Naive thymus-derived CD4-positive, alpha-beta T cell (primary cell): ENCODE measurements at regions of chr6 and their contacts with region 1.

Region 1: GRCh38 chr6:131116749-131117360 is 18.4 kb upstream of the AKAP7 start:
- DNase-seq: peak in 6 of 9 donors; percentile 26 to 54 (median 42)
- ATAC-seq: peak; percentile 49
- H3K4me3 ChIP-seq: no peak overlapping the region
- H3K4me3 Mint-ChIP-seq: no peak overlapping the region
- H3K27ac ChIP-seq: no peak overlapping the region
- H3K27ac Mint-ChIP-seq: no peak overlapping the region
- H3K4me1 ChIP-seq: no peaks in the 10 kb centered on the region
- H3K4me1 Mint-ChIP-seq: peaks cover 0 to 2% (median 0%) of the 10 kb centered on the region in 7 donors
- H3K27me3 ChIP-seq: no peaks in the 10 kb centered on the region
- H3K27me3 Mint-ChIP-seq: peaks cover 0 to 8% (median 0%) of the 10 kb centered on the region in 5 donors

Region 2: DNA sequence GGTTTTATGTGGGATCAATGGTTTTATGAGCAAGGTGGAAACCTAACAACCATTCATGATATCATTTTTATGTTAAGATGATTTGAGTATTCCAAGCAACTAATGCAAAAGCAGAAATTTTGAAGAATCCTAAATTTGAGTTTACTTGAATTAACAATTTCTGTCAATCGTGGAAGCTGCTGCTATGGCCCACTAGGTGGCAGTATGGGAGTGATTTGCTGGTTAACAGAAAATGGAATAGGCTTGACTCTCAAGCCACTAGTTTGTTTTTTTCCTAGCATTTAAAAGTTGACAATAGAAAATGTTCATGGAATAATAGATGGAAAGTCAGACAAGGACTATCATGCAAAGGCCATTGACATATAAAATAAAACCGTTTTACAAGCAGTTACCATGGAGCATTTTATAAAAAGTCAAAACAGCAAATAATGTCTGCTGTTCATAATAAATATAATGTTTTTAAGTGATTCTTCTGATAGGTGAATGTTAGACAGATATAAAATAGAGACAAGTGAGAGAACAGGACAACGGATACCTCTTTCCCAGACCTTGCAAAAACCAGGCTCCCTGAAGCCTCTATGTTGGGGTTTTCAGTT is 794.1 kb before region 1 on chr6:
- CTCF ChIA-PET with region 1: no interaction called
- POLR2A ChIA-PET with region 1: no interaction called
- intact Hi-C with region 1: loop called in 1 of 2 experiments (anchors 2 kb)
- DNase-seq: peak in 8 of 9 donors; percentile 30 to 61 (median 56)
- ATAC-seq: peak; percentile 61
- H3K4me3 ChIP-seq: no peak overlapping the region
- H3K4me3 Mint-ChIP-seq: no peak overlapping the region
- H3K27ac ChIP-seq: no peak overlapping the region
- H3K27ac Mint-ChIP-seq: no peak overlapping the region
- H3K4me1 ChIP-seq: no peaks in the 10 kb centered on the region
- H3K4me1 Mint-ChIP-seq: peaks cover 0 to 16% (median 5%) of the 10 kb centered on the region in 7 donors
- H3K27me3 ChIP-seq: no peaks in the 10 kb centered on the region
- H3K27me3 Mint-ChIP-seq: peaks cover 0 to 33% (median 0%) of the 10 kb centered on the region in 5 donors

Region 3: GRCh38 chr6:131063028-131063763 is 53.7 kb before region 1 on chr6 and contains the start of gene EPB41L2:
- CTCF ChIA-PET with region 1: no interaction called
- POLR2A ChIA-PET with region 1: no interaction called
- intact Hi-C with region 1: loop called in 1 of 2 experiments (anchors 5 kb)
- DNase-seq: peak; percentile 63 to 87 (median 73)
- ATAC-seq: peak; percentile 94
- H3K4me3 ChIP-seq: peak within 1 kb of the TSS; percentile 63
- H3K4me3 Mint-ChIP-seq: peak within 1 kb of the TSS; percentile 83 to 93 (median 90)
- H3K27ac ChIP-seq: peak within 1 kb of the TSS; percentile 67
- H3K27ac Mint-ChIP-seq: peak within 1 kb of the TSS; percentile 20 to 92 (median 77)
- H3K4me1 ChIP-seq: peaks cover 0 to 6% of the 10 kb centered on the region in 2 donors
- H3K4me1 Mint-ChIP-seq: peaks cover 8 to 27% (median 25%) of the 10 kb centered on the region in 7 donors
- H3K27me3 ChIP-seq: no peaks in the 10 kb centered on the region
- H3K27me3 Mint-ChIP-seq: peaks cover 0 to 35% (median 0%) of the 10 kb centered on the region in 5 donors
- total RNA-seq, gene EPB41L2: 10.3 to 26.9 (median 20.9) TPM